ENCODE measurements at regions of chr9 and their contacts with region 1.

Region 1: DNA sequence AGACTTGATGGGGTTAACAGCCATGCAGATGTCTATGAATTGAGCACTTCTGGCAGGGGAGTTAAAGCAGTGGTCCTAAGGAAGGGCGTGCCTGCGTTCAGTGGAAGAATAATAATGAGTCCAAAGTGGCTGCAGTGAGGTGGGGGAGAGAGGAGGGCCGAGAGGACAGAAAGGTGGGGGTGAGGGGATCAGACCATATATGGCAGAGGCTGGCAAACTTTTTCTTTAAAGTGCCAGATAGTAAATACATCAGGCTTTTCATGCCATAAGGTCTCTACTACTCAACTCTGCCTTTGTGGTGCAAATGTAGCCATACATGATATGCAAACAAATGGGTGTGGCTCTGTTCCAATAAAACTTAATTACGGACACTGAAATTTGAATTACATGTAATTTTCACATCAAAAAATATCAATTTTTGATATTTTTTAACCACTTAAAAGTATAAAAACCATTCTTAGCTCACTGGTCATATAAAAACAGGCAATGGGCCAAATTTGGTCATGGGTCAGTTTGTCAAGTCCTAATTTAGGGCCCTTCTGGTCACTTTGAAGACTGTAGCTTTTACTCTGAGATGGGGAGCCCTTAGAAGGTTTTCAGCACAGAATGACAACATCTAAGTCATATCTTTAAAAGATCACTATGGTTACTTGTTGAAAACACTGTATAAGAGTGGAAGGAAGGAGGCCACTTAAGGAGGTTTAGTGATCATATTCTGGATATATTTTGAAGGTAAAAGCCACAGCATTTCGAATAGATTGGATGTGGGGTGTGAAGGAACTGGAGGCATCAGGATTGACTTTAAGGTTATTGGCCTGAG is 76.9 kb downstream of the STRBP start:
- DNase-seq: no peak
- H3K4me3 ChIP-seq: no peak overlapping the region
- H3K4me3 Mint-ChIP-seq: no peak overlapping the region
- H3K27ac ChIP-seq: no peak overlapping the region
- H3K27ac Mint-ChIP-seq: no peak overlapping the region
- H3K4me1 ChIP-seq: no peaks in the 10 kb centered on the region
- H3K4me1 Mint-ChIP-seq: no peaks in the 10 kb centered on the region
- H3K27me3 ChIP-seq: no peaks in the 10 kb centered on the region
- H3K27me3 Mint-ChIP-seq: no peaks in the 10 kb centered on the region
- CTCF ChIP-seq: no peak

Region 2: DNA sequence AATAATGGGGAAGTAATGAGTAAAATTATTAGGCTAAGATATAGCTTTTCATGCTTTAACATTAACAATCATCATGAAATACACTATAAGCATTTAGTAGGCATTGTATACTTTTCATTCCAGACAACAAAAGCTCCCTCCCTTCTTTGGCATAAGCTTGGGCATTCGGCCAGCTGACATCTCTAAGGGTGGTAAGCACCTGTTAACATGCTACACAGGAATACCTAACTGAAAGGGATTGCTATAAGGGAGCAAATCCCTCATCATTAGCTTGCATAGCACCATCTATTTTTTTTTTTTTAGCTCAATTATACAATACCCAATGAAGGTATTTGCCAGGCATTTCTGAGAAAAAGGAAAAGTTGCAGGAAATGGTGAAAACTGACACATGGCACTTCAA is 60.3 kb after region 1 on chr9:
- intact Hi-C with region 1: loop called in 1 of 2 experiments (anchors 10 kb)
- DNase-seq: no peak
- H3K4me3 ChIP-seq: no peak overlapping the region
- H3K4me3 Mint-ChIP-seq: no peak overlapping the region
- H3K27ac ChIP-seq: no peak overlapping the region
- H3K27ac Mint-ChIP-seq: no peak overlapping the region
- H3K4me1 ChIP-seq: no peaks in the 10 kb centered on the region
- H3K4me1 Mint-ChIP-seq: no peaks in the 10 kb centered on the region
- H3K27me3 ChIP-seq: no peaks in the 10 kb centered on the region
- H3K27me3 Mint-ChIP-seq: no peaks in the 10 kb centered on the region
- CTCF ChIP-seq: no peak